ENCODE measurements at regions of chr4 and their contacts with region 1.

Region 1: DNA sequence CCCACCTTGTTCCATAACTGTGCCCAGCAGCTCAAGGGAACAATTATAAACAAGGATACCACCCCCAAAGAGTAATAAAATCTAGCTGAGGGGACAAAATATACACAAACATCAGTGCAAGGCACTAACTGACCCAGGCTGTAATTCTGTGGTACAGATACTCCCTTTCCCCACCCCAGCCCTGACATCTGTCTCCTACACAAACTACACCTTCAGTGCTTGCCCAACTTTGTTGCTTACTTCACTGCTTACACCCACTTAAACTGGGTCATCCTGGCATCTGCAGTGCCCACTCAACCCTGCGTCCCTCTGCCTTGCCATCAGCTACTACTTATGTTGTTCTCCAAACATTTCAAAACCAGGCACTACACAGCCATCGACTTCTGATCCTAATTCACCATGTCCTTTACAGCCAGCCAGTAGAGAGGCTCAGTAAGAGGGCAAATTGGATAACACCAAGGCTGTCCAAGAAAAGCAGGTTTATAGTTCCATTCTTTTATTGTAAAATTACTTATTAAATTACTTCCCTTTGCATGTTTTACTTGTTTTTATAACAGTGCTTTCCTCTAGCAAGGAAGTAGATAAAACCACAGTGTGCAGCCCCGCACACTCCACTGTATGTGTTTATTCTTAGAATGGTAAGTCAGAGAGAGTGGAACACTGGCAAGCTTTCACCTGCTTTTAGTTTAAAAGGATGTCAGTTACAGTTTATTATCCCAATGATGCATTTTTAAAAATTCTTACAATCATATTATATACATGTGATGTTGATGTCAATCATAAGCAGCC is 149.6 kb downstream of the INPP4B start:
- DNase-seq: no peak
- H3K4me3 ChIP-seq: no peak overlapping the region
- H3K27ac ChIP-seq: no peak overlapping the region
- H3K4me1 ChIP-seq: no peaks in the 10 kb centered on the region
- H3K27me3 ChIP-seq: no peaks in the 10 kb centered on the region
- CTCF ChIP-seq: no peak

Region 2: DNA sequence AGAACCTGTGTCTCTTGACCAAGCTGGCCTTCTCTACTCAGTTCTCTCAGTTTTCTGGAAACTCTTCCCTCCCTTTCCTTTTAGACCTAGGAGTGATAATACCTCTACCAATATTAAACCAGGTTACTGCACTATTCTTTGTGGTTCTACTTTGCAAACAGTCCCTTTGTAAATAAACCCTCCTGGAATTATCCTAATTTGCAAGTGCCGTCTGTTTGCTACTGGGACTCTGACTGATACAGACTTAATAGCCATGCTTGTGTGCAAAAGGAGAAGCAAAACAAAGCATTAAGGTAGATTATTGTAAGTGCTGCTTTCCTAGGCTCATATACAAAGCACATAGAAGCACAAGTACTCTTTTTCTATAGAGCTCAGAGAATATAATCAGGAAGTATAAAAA is 357.5 kb before region 1 on chr4:
- CTCF ChIA-PET with region 1: no interaction called
- POLR2A ChIA-PET with region 1: interaction called, 10 read pairs
- intact Hi-C with region 1: no loop called
- DNase-seq: no peak
- H3K4me3 ChIP-seq: no peak overlapping the region
- H3K27ac ChIP-seq: no peak overlapping the region
- H3K4me1 ChIP-seq: no peaks in the 10 kb centered on the region
- H3K27me3 ChIP-seq: no peaks in the 10 kb centered on the region
- CTCF ChIP-seq: no peak

Region 3: GRCh38 chr4:142558851-142559250 is 137.7 kb before region 1 on chr4:
- CTCF ChIA-PET with region 1: no interaction called
- POLR2A ChIA-PET with region 1: no interaction called
- intact Hi-C with region 1: no loop called
- DNase-seq: peak; percentile 14
- H3K4me3 ChIP-seq: no peak overlapping the region
- H3K27ac ChIP-seq: no peak overlapping the region
- H3K4me1 ChIP-seq: no peaks in the 10 kb centered on the region
- H3K27me3 ChIP-seq: no peaks in the 10 kb centered on the region
- CTCF ChIP-seq: no peak

Region 4: GRCh38 chr4:142574306-142574705 is 122.2 kb before region 1 on chr4:
- CTCF ChIA-PET with region 1: no interaction called
- POLR2A ChIA-PET with region 1: no interaction called
- intact Hi-C with region 1: no loop called
- DNase-seq: no peak
- H3K4me3 ChIP-seq: no peak overlapping the region
- H3K27ac ChIP-seq: no peak overlapping the region
- H3K4me1 ChIP-seq: no peaks in the 10 kb centered on the region
- H3K27me3 ChIP-seq: no peaks in the 10 kb centered on the region
- CTCF ChIP-seq: no peak

Measured in A673 (cell line).